ENCODE measurements at regions of chr1 and their contacts with region 1.

Region 1: DNA sequence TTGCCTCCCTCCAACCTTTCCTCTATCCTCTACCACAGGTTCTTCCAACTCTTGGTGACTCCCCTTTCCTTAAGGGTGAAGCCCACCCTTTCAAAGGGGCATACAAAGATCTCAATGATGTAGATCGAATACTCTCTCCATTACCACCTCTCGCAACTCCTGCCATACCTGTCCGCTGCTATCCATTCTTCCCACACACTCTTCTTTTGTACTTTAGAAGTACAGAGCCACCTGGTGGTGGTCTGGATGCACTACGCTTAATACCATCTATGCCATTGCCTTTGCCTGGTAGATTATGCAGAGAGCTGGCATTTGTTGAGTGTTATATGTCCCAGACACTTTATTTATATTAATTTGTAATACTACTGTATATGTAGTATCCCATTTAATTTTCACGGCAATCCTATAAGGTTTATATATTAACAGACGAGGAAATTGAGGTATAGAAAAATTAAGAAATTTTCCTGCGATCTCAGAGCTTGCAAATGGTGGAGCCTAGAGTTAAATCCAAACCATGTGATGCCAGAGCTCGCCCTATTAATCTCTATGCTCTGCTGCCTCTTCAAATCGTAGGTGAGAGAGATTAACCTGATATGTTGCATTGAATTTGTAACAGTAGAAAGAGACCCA is 22.9 kb downstream of the TSHB start:
- DNase-seq: no peak
- H3K4me3 ChIP-seq: no peak overlapping the region
- CTCF ChIP-seq: peak; percentile 75

Region 2: DNA sequence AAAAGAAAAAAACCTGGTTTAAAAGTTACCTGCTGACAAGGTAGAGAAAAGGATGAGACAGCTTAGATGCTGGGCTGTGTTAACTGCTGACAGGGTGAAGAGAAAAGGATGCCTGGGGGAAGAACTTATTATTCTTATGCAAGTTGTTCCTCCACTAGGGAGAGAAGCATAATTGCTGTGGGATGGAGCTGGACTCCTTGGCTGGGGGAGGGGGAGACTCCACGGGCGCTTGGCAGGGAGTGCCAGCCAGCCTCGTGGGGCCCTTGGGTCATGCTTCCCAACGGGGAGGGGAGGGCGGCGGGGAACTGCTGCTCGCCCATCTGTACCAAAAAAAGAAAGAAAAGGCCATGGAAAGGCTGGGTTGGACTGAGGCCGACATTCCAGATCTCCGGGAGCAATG is 150.8 kb before region 1 on chr1:
- CTCF ChIA-PET with region 1: no interaction called
- POLR2A ChIA-PET with region 1: no interaction called
- DNase-seq: no peak
- H3K4me3 ChIP-seq: no peak overlapping the region
- CTCF ChIP-seq: no peak

Region 3: GRCh38 chr1:114979278-114979891 is 73.2 kb before region 1 on chr1:
- CTCF ChIA-PET with region 1: interaction called, 15 read pairs
- POLR2A ChIA-PET with region 1: no interaction called
- DNase-seq: peak; percentile 17
- H3K4me3 ChIP-seq: no peak overlapping the region
- CTCF ChIP-seq: peak; percentile 64

Region 4: DNA sequence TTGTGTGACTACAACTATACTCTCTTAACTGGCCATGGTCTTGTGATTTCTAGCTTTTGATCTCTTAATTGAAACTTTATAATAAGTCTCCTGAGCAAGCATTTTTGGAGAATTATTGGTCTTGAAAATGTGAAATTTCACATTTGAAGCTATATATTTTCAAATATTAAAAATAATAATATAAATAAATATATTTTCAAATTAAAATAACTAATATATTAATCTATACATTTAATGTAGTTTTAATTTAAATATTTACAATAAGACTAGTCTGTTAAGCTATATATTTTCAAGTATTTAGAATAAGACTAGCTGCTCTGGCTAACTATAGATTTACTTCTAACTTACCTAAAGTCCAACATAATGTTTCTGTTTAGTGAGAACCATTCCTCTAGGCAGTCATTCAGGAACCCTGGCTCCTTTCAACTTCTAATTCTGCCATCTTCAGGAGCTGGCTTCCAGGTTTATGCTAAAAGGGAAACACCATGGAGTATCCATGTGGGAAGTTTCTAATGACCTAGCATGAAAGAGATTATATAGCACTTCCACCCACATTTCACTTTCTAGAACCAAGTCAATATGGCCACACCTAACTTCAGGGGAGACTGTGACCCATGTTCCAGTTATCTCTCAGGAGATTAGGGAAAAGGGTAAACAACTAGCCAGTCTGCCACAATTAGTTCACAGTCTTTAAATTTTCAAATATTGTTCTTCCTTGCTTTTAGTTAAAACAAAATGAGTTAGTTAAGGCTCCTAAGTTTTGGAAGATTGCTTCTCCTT is 54.9 kb before region 1 on chr1:
- CTCF ChIA-PET with region 1: interaction called, 11 read pairs
- POLR2A ChIA-PET with region 1: no interaction called
- DNase-seq: no peak
- H3K4me3 ChIP-seq: no peak overlapping the region
- CTCF ChIP-seq: no peak

Region 5: DNA sequence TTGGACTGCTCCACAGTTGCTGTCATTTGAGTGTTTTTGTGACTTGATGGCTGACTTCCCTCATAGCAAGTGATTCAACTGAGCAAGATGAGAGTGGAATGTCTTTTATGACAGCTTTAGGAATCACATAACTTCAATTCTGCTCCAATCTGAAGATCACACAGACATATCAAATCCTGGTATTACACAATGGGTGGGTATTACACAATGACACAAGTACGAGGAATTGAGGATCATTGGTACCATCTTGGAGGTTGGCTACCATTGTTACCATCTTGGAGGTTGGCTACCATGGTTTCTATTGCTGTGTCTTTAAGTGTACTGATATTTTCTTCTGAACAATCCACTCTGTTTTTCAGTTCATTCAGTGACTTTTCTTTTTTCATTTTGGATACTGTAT is 31.4 kb before region 1 on chr1:
- CTCF ChIA-PET with region 1: interaction called, 11 read pairs
- POLR2A ChIA-PET with region 1: no interaction called
- DNase-seq: no peak
- H3K4me3 ChIP-seq: no peak overlapping the region
- CTCF ChIP-seq: no peak

Region 6: GRCh38 chr1:115041654-115042053 is 10.9 kb before region 1 on chr1:
- CTCF ChIA-PET with region 1: interaction called, 104 read pairs
- POLR2A ChIA-PET with region 1: no interaction called
- DNase-seq: no peak
- H3K4me3 ChIP-seq: no peak overlapping the region
- CTCF ChIP-seq: no peak

Region 7: GRCh38 chr1:115062542-115063011 is 10.0 kb after region 1 on chr1:
- CTCF ChIA-PET with region 1: interaction called, 51 read pairs
- POLR2A ChIA-PET with region 1: no interaction called
- DNase-seq: no peak
- H3K4me3 ChIP-seq: no peak overlapping the region
- CTCF ChIP-seq: no peak

Region 8: GRCh38 chr1:115112496-115113375 is 60.2 kb after region 1 on chr1:
- CTCF ChIA-PET with region 1: interaction called, 12 read pairs
- POLR2A ChIA-PET with region 1: no interaction called
- DNase-seq: no peak
- H3K4me3 ChIP-seq: no peak overlapping the region
- CTCF ChIP-seq: peak; percentile 78